WTC11 (cell line): ENCODE measurements at regions of chr7 and their contacts with region 1.

Region 1: GRCh38 chr7:143214789-143215679 is 6.8 kb upstream of the TAS2R40 start:
- DNase-seq: peak; percentile 44
- ATAC-seq: peak; percentile 99
- H3K4me3 Mint-ChIP-seq: no peak overlapping the region
- H3K27ac Mint-ChIP-seq: no peak overlapping the region
- H3K4me1 Mint-ChIP-seq: no peaks in the 10 kb centered on the region
- H3K27me3 Mint-ChIP-seq: no peaks in the 10 kb centered on the region
- CTCF ChIP-seq: peak; percentile 99

Region 2: DNA sequence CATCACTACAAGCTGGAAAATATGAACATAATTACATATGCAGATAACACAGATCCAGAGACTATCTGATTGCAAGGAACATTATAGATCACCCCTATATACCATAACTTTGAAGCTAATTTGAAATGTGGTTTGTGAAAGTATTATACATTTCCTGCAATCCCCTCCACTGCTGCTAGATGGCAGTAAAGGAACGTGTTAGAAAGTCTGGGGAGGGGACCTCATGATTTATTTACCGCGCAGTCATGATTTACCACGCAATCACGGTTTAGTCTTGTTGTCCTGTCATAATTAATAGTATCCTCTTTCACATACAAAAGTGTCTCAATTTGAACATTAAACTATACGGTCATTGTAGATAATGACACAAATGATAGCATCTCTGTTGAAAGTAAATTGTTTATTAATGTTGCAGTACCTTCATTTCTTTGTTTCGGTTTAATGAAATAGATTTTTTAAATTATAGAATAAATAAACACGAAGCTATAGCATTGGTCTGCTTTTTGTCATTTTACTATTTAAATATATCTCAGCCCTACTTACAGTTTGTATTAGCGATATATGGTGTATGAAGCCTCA is 611.1 kb before region 1 on chr7:
- CTCF ChIA-PET with region 1: interaction called, 16 read pairs
- POLR2A ChIA-PET with region 1: no interaction called
- DNase-seq: peak; percentile 60
- ATAC-seq: peak; percentile 55
- H3K4me3 Mint-ChIP-seq: no peak overlapping the region
- H3K27ac Mint-ChIP-seq: no peak overlapping the region
- H3K4me1 Mint-ChIP-seq: 0 out of 2 replicates have a peak, but pooled peaks cover 2% of the 10 kb centered on the region
- H3K27me3 Mint-ChIP-seq: no peaks in the 10 kb centered on the region; the same call in 1 of the 2 replicates
- CTCF ChIP-seq: peak; percentile 42; the same call in 1 of the 2 replicates

Region 3: GRCh38 chr7:142790056-142790455 is 425.0 kb before region 1 on chr7:
- CTCF ChIA-PET with region 1: no interaction called
- POLR2A ChIA-PET with region 1: no interaction called
- DNase-seq: no peak
- ATAC-seq: no peak
- H3K4me3 Mint-ChIP-seq: no peak overlapping the region
- H3K27ac Mint-ChIP-seq: no peak overlapping the region
- H3K4me1 Mint-ChIP-seq: peaks cover 21% of the 10 kb centered on the region
- H3K27me3 Mint-ChIP-seq: peaks cover 20% of the 10 kb centered on the region
- CTCF ChIP-seq: no peak

Region 4: DNA sequence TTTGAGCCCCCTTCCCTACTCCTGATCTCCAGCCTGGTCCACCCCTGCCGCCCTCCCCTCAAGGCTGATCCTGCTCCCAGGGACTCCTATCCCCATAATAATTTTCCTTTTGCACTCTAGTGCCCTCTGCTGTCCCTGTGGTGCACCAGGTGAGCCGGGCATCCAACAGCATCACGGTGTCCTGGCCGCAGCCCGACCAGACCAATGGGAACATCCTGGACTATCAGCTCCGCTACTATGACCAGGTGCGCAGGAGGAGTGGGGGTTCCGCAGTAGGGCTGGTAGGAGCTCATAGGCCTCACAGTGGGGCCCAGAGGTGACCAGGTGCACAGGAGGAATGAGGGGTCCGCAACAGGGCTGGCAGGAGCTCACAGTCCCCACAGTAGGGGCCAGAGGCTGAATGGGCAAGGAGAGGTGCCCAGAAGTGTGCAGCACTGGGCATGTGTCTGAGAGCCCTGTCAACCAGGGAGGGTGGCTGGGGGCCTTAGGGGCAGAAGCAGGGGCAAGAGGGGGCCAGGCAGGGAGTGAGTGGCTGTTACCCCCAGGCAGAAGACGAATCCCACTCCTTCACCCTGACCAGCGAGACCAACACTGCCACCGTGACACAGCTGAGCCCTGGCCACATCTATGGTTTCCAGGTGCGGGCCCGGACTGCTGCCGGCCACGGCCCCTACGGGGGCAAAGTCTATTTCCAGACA is 348.5 kb before region 1 on chr7:
- CTCF ChIA-PET with region 1: interaction called, 12 read pairs
- POLR2A ChIA-PET with region 1: no interaction called
- DNase-seq: peak; percentile 80
- ATAC-seq: peak; percentile 92
- H3K4me3 Mint-ChIP-seq: no peak overlapping the region
- H3K27ac Mint-ChIP-seq: no peak overlapping the region
- H3K4me1 Mint-ChIP-seq: peaks cover 39% of the 10 kb centered on the region
- H3K27me3 Mint-ChIP-seq: no peaks in the 10 kb centered on the region; the same call in none of the 2 replicates
- CTCF ChIP-seq: peak; percentile 39; the same call in 1 of the 2 replicates

Region 5: GRCh38 chr7:142992464-142992863 is 222.6 kb before region 1 on chr7:
- CTCF ChIA-PET with region 1: interaction called, 10 read pairs
- POLR2A ChIA-PET with region 1: no interaction called
- DNase-seq: no peak
- ATAC-seq: no peak
- H3K4me3 Mint-ChIP-seq: no peak overlapping the region
- H3K27ac Mint-ChIP-seq: no peak overlapping the region
- H3K4me1 Mint-ChIP-seq: no peaks in the 10 kb centered on the region
- H3K27me3 Mint-ChIP-seq: peaks cover 3% of the 10 kb centered on the region; the same call in 1 of the 2 replicates
- CTCF ChIP-seq: no peak

Region 6: DNA sequence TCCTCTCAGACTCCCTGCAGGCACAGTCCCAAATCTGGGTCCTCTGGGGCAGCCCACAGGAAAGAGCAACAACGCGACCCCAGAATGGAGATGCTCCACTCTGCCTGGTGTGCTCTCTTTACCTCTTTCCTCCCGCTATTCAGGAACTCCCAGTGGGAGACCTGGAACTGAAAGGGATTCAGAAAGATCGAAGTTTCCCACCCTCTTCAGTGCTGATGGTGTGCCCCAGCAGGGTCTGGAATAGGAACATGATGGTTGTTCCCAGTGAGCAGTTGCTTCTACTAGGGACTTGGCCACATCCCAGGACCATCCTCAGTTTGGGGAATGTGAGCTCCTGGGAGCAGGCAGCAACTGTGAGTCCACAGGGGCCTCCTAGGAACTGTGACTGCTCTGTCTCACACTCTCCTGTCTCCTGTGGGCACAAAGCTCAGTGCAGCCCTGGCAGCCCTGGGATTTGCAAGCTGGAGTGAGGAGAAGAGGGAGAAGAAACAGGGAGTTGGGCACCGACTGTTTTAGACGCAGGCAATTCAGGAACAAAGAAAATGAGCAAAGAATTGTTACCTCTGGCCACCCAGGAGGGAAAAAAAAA is 145.0 kb before region 1 on chr7:
- CTCF ChIA-PET with region 1: interaction called, 13 read pairs
- POLR2A ChIA-PET with region 1: no interaction called
- DNase-seq: no peak
- ATAC-seq: peak; percentile 81
- H3K4me3 Mint-ChIP-seq: no peak overlapping the region
- H3K27ac Mint-ChIP-seq: peak overlapping the region; percentile 64; the same call in 1 of the 2 replicates
- H3K4me1 Mint-ChIP-seq: peaks cover 27% of the 10 kb centered on the region
- H3K27me3 Mint-ChIP-seq: no peaks in the 10 kb centered on the region
- CTCF ChIP-seq: no peak

Region 7: DNA sequence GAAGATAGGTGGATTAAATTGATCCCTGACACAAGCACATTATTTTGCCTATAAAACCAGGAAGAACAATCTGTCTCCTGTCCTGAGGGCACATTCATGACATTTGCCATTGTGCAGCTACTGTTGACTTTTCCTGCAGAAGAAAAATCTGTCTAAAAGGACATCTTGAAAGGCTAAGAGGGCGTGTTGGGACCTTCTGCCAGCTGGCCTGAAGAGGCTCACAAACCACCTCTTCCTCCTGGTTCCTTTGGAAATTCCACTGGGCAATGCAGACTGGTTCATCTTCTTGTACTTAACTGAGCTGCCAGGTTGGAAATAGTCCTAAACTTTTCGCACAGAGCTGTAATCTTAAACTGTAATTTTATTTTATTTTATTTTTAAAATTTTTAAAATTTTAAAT is 118.9 kb before region 1 on chr7:
- CTCF ChIA-PET with region 1: no interaction called
- POLR2A ChIA-PET with region 1: no interaction called
- DNase-seq: no peak
- ATAC-seq: no peak
- H3K4me3 Mint-ChIP-seq: no peak overlapping the region
- H3K27ac Mint-ChIP-seq: no peak overlapping the region
- H3K4me1 Mint-ChIP-seq: no peaks in the 10 kb centered on the region
- H3K27me3 Mint-ChIP-seq: peaks cover 3% of the 10 kb centered on the region
- CTCF ChIP-seq: no peak

Region 8: GRCh38 chr7:143229054-143229790 is 14.2 kb after region 1 on chr7:
- CTCF ChIA-PET with region 1: interaction called, 26 read pairs
- POLR2A ChIA-PET with region 1: no interaction called
- DNase-seq: peak; percentile 28
- ATAC-seq: peak; percentile 95
- H3K4me3 Mint-ChIP-seq: no peak overlapping the region
- H3K27ac Mint-ChIP-seq: peak overlapping the region; percentile 68
- H3K4me1 Mint-ChIP-seq: peaks cover 3% of the 10 kb centered on the region; the same call in 1 of the 2 replicates
- H3K27me3 Mint-ChIP-seq: peaks cover 16% of the 10 kb centered on the region; the same call in 1 of the 2 replicates
- CTCF ChIP-seq: no peak